ENCODE measurements at regions of chr2 and their contacts with region 1.

Region 1: DNA sequence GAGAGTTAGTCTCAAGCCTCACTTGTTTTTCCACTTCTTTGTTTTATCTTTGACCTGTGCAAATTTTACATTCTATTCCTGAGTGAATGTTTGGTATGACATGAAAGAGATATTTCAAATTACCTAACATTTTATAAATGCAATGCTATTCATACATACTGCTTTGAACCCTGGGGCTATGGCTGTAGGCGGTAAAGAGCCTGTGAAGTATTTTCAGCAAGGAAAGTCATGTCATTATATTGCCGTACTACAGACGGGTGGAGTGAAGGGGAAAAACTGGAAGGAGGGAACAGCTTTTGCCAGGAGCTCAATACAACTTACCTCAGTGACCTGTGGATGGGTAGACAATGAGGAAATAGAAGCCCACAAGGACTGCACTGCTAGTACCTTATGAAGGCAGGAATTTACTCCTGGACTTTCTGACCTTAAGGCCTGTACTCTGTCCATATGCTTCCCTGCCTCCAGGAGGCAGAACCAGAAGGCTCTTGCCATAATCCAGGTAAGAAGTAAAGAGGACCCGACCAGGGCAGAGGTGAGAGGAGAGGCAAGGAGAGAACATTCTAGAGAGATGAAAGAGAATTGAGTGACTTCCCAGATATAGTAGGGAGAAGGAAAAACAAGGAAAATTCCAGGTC is 28.4 kb upstream of the TET3 start:
- DNase-seq: no peak
- H3K4me3 ChIP-seq: no peak overlapping the region
- H3K27ac ChIP-seq: no peak overlapping the region
- H3K4me1 ChIP-seq: no peaks in the 10 kb centered on the region
- H3K27me3 ChIP-seq: no peaks in the 10 kb centered on the region

Region 2: GRCh38 chr2:73851274-73851673 is 105.1 kb before region 1 on chr2:
- CTCF ChIA-PET with region 1: no interaction called
- POLR2A ChIA-PET with region 1: no interaction called
- DNase-seq: peak in 2 of 3 donors; percentile 54 to 55
- H3K4me3 ChIP-seq: no peak overlapping the region
- H3K27ac ChIP-seq: no peak overlapping the region
- H3K4me1 ChIP-seq: no peaks in the 10 kb centered on the region
- H3K27me3 ChIP-seq: no peaks in the 10 kb centered on the region

Region 3: GRCh38 chr2:73970850-73971471 is 14.6 kb after region 1 on chr2:
- CTCF ChIA-PET with region 1: interaction called, 10 read pairs
- POLR2A ChIA-PET with region 1: no interaction called
- DNase-seq: peak; percentile 89 to 94 (median 93)
- H3K4me3 ChIP-seq: peak overlapping the region in 6 of 7 experiments; percentile 27 to 69 (median 44)
- H3K27ac ChIP-seq: peak overlapping the region; percentile 66 to 74
- H3K4me1 ChIP-seq: peaks cover 28 to 56% (median 51%) of the 10 kb centered on the region in 4 experiments
- H3K27me3 ChIP-seq: no peaks in the 10 kb centered on the region

Region 4: DNA sequence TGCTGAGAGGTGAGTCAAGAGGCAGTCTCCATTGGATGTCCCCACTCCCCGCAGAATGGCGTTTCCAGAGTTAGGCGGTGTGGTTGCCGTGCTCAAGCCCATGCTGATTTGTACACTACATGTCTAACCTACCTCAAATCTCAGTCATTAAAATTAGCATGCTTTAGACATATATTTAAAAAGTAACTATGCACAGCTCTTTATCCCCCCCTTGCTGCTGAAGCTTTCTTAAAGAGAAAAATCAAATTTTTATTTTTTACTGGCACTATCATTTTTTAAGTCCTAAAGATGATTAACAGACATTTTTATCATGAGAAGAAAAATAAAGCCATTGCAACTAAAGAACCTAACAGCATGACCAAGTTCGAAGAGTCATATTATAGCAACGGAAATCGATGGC is 148.5 kb after region 1 on chr2:
- CTCF ChIA-PET with region 1: no interaction called
- POLR2A ChIA-PET with region 1: no interaction called
- DNase-seq: peak in 2 of 3 donors; percentile 39 to 46
- H3K4me3 ChIP-seq: no peak overlapping the region
- H3K27ac ChIP-seq: no peak overlapping the region
- H3K4me1 ChIP-seq: no peaks in the 10 kb centered on the region
- H3K27me3 ChIP-seq: no peaks in the 10 kb centered on the region